ENCODE measurements at regions of chr13 and their contacts with region 1.

Region 1: DNA sequence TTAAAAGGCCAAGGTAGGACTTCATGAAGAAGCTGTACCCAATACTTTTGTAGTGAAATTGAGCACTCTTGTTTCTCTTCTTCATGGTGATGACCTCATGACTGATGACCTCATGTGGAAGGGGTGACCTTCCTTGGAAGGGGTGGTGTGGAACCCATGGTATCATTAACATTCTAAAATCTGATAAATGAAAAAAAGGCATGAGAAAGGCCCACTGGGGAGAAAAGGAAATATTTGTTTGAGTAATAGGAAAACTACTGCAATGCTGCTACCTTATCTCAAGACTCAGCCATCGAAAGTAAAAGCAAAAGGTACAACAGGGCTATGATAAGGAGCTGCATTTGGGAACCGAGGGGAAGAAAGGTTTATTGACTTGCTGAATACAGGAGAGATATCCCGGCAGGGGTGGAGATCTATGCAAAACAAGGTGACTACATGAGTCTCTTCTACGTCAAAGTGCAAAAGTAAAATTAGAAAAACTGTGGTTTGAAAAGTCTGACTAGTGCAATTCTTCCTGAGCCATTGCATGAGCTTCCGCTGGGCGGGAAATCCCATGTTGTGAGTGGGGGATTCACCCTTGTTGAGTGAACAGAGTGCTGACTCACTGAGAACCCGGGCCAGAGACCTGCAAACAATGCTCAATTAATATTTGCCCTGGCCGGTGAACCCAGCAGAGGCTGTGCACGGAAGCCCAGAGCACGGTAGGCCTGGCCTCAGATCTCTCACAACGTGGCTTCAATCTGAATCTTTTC is 138.9 kb upstream of the RFC3 start:
- DNase-seq: peak; percentile 94
- H3K4me3 Mint-ChIP-seq: no peak overlapping the region
- H3K27ac Mint-ChIP-seq: no peak overlapping the region
- H3K4me1 Mint-ChIP-seq: peaks cover 32% of the 10 kb centered on the region
- H3K27me3 Mint-ChIP-seq: no peaks in the 10 kb centered on the region
- CTCF ChIP-seq: no peak

Region 2: DNA sequence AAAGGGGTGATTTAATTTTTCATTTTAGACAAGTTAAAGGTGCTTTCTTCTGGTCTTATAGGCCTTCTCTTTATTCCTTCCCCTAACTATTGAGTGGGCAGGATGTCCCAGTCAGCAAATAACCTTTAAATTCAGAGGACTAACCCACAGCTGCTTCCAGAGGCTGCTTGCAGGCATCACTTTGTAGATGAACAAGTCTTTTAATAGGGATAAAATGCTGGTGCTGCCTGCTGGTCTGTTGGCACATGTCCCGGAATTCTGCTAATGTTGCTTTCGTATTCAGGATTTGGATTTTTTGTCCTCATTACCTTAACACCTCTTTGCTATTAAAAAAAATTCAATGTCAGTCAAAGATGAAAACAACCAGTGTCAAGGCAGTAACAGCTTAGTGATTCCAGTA is 795.6 kb before region 1 on chr13:
- CTCF ChIA-PET with region 1: no interaction called
- POLR2A ChIA-PET with region 1: no interaction called
- intact Hi-C with region 1: no loop called
- DNase-seq: peak; percentile 50
- H3K4me3 Mint-ChIP-seq: no peak overlapping the region
- H3K27ac Mint-ChIP-seq: no peak overlapping the region
- H3K4me1 Mint-ChIP-seq: peaks cover 21% of the 10 kb centered on the region
- H3K27me3 Mint-ChIP-seq: no peaks in the 10 kb centered on the region
- CTCF ChIP-seq: no peak

Region 3: GRCh38 chr13:33642374-33643068 is 36.6 kb before region 1 on chr13:
- CTCF ChIA-PET with region 1: no interaction called
- POLR2A ChIA-PET with region 1: interaction called, 10 read pairs
- intact Hi-C with region 1: no loop called
- DNase-seq: peak; percentile 85
- H3K4me3 Mint-ChIP-seq: no peak overlapping the region
- H3K27ac Mint-ChIP-seq: peak overlapping the region; percentile 79
- H3K4me1 Mint-ChIP-seq: peaks cover 58% of the 10 kb centered on the region
- H3K27me3 Mint-ChIP-seq: no peaks in the 10 kb centered on the region
- CTCF ChIP-seq: no peak

Region 4: GRCh38 chr13:33696530-33696929 is 17.4 kb after region 1 on chr13:
- CTCF ChIA-PET with region 1: interaction called, 7 read pairs
- POLR2A ChIA-PET with region 1: interaction called, 13 read pairs
- intact Hi-C with region 1: no loop called
- DNase-seq: no peak
- H3K4me3 Mint-ChIP-seq: no peak overlapping the region
- H3K27ac Mint-ChIP-seq: peak overlapping the region; percentile 54
- H3K4me1 Mint-ChIP-seq: peaks cover 23% of the 10 kb centered on the region
- H3K27me3 Mint-ChIP-seq: no peaks in the 10 kb centered on the region
- CTCF ChIP-seq: no peak

Region 5: GRCh38 chr13:33751151-33751550 is 72.1 kb after region 1 on chr13:
- CTCF ChIA-PET with region 1: no interaction called
- POLR2A ChIA-PET with region 1: no interaction called
- intact Hi-C with region 1: no loop called
- DNase-seq: no peak
- H3K4me3 Mint-ChIP-seq: no peak overlapping the region
- H3K27ac Mint-ChIP-seq: no peak overlapping the region
- H3K4me1 Mint-ChIP-seq: no peaks in the 10 kb centered on the region
- H3K27me3 Mint-ChIP-seq: no peaks in the 10 kb centered on the region
- CTCF ChIP-seq: no peak